B cell (primary cell): ENCODE measurements at regions of chr15 and their contacts with region 1.

Region 1: GRCh38 chr15:70281811-70282307 is 184.1 kb upstream of the TLE3 start:
- DNase-seq: peak; percentile 79
- ATAC-seq: peak; percentile 91
- H3K4me3 ChIP-seq: peak overlapping the region in 1 of 5 experiments; percentile 0
- H3K4me3 Mint-ChIP-seq: peak overlapping the region; percentile 59
- H3K27ac ChIP-seq: no peak overlapping the region
- H3K27ac Mint-ChIP-seq: peak overlapping the region; percentile 91
- H3K4me1 ChIP-seq: peaks cover 26 to 39% of the 10 kb centered on the region in 2 donors
- H3K4me1 Mint-ChIP-seq: peaks cover 50% of the 10 kb centered on the region
- H3K27me3 ChIP-seq: peaks cover 0 to 4% (median 0%) of the 10 kb centered on the region in 4 experiments
- H3K27me3 Mint-ChIP-seq: no peaks in the 10 kb centered on the region
- CTCF ChIP-seq: no peak

Region 2: GRCh38 chr15:70264014-70264582 is 17.8 kb before region 1 on chr15:
- CTCF ChIA-PET with region 1: interaction called, 7 read pairs
- POLR2A ChIA-PET with region 1: interaction called, 7 read pairs
- intact Hi-C with region 1: loop called (anchors 1 kb)
- DNase-seq: peak; percentile 71
- ATAC-seq: peak; percentile 54
- H3K4me3 ChIP-seq: no peak overlapping the region
- H3K4me3 Mint-ChIP-seq: peak overlapping the region; percentile 55
- H3K27ac ChIP-seq: no peak overlapping the region
- H3K27ac Mint-ChIP-seq: peak overlapping the region; percentile 68
- H3K4me1 ChIP-seq: peaks cover 88 to 96% of the 10 kb centered on the region in 2 donors
- H3K4me1 Mint-ChIP-seq: peaks cover 95% of the 10 kb centered on the region
- H3K27me3 ChIP-seq: peaks cover 0 to 3% (median 0%) of the 10 kb centered on the region in 4 experiments
- H3K27me3 Mint-ChIP-seq: no peaks in the 10 kb centered on the region
- CTCF ChIP-seq: no peak

Region 3: DNA sequence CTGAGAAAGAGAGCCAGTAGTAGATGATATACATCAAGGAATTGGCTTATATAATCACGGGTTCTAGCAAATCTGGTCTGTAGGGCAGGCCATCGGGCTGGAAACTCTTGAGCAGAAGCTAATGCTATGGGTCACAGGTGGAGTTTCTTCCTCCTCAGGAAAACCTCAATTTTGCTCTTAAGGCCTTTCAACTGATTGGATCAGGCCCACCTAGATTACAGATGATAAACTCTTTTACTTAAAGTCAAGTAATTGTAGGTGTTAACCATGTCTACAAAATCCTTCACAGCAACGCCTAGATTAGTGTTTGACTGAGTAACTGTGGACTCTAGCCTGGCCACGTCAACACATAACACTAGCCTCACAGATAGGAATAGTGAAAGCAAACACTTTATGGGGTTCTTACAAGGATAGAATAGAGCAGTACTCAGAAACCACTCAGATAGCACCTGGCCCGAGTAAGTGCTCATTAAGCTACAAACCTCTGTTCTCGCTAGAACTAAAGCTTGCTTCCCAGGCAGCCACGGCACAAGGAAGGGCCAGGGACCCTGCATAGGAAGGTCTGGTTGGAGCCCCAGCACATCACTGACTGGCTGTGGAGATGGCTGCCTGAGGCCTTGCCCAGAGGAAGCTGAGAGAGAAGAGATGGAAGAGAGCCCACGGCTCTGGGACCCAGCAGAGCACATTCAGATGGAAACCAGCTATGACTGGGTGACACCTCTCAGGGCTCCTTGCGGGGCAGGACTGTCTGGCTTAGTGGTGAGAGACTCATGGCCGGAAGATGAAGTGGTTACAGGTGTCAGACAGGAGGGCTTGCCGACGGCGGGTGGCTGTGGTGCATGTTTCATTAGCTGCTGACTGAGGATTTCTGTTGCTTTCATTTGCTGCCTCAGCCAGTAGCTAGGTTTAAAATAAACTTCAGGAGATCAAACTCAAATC is 18.3 kb after region 1 on chr15:
- CTCF ChIA-PET with region 1: interaction called, 3 read pairs
- POLR2A ChIA-PET with region 1: no interaction called
- intact Hi-C with region 1: loop called (anchors 2 kb)
- DNase-seq: peak; percentile 72
- ATAC-seq: peak; percentile 98
- H3K4me3 ChIP-seq: no peak overlapping the region
- H3K4me3 Mint-ChIP-seq: peak overlapping the region; percentile 33
- H3K27ac ChIP-seq: no peak overlapping the region
- H3K27ac Mint-ChIP-seq: peak overlapping the region; percentile 66
- H3K4me1 ChIP-seq: peaks cover 12 to 19% of the 10 kb centered on the region in 2 donors
- H3K4me1 Mint-ChIP-seq: peaks cover 17% of the 10 kb centered on the region
- H3K27me3 ChIP-seq: no peaks in the 10 kb centered on the region
- H3K27me3 Mint-ChIP-seq: no peaks in the 10 kb centered on the region
- CTCF ChIP-seq: no peak

Region 4: GRCh38 chr15:70892002-70892914 is 610.4 kb after region 1 on chr15 and contains the starts of genes LRRC49 and THAP10:
- CTCF ChIA-PET with region 1: no interaction called
- POLR2A ChIA-PET with region 1: no interaction called
- intact Hi-C with region 1: loop called (anchors 10 kb)
- DNase-seq: peak; percentile 69
- ATAC-seq: peak; percentile 68
- H3K4me3 ChIP-seq: peak within 1 kb of the TSS; percentile 61 to 90 (median 67)
- H3K4me3 Mint-ChIP-seq: peak within 1 kb of the TSS; percentile 90
- H3K27ac ChIP-seq: peak within 1 kb of the TSS in 1 of 2 donors; percentile 6
- H3K27ac Mint-ChIP-seq: peak within 1 kb of the TSS; percentile 69
- H3K4me1 ChIP-seq: peaks cover 17 to 19% of the 10 kb centered on the region in 2 donors
- H3K4me1 Mint-ChIP-seq: peaks cover 14% of the 10 kb centered on the region
- H3K27me3 ChIP-seq: peaks cover 0 to 14% (median 8%) of the 10 kb centered on the region in 4 experiments
- H3K27me3 Mint-ChIP-seq: peaks cover 30% of the 10 kb centered on the region
- CTCF ChIP-seq: no peak
- total RNA-seq, gene LRRC49: 0.49 and 1.4 TPM in 2 replicates
- total RNA-seq, gene THAP10: 0.36 and 0.37 TPM in 2 replicates